ENCODE measurements at regions of chr12 and their contacts with region 1.

Region 1: DNA sequence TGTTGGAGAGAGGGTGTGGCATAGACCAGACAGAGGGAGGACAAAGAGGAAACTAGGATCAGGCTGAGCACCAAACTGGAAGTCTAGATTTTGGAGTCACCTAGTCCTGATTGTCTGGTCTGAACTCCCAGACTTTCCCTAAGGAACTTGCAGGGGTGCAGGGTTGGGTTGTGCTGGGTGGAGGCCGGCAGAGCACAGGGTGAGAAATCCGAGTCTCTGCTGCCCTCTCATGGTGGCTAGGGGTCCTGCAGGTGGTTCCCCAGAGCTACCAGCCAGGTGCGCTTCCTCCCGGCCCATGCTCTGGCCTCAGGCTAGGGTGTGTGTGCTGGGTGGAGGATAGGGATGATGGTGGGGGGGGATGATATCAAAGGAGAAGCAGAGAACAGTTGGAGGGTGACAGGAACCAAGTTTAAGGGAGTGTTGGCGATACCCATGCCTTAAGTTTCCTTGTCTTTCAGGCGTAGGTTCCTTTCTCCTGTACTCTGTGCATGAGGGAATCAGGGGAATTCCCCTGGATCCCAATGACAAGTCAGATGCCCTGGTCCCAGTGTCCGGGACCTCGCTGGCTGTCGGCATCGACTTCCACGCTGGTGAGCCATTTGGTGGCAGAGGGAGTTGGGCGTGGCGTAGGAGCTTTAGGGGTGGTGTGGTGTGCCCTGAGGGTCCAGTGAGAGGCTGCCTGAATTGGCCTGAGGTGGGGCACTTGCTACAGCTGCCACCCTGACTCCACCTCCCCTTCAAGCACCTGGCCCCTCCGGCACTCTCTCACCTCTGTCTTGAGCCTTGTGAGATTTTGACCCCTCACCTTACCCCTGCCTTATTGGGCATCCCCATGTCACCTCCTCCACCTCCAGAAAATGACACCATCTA is 33.4 kb upstream of the NXPH4 start:
- DNase-seq: peak; percentile 65
- H3K4me3 Mint-ChIP-seq: no peak overlapping the region
- H3K27ac Mint-ChIP-seq: peak overlapping the region; percentile 34
- H3K4me1 Mint-ChIP-seq: peaks cover 6% of the 10 kb centered on the region
- H3K27me3 Mint-ChIP-seq: peaks cover 6% of the 10 kb centered on the region

Region 2: GRCh38 chr12:56720731-56721151 is 462.4 kb before region 1 on chr12:
- intact Hi-C with region 1: no loop called
- DNase-seq: no peak
- H3K4me3 Mint-ChIP-seq: peak overlapping the region; percentile 45
- H3K27ac Mint-ChIP-seq: peak overlapping the region; percentile 76
- H3K4me1 Mint-ChIP-seq: peaks cover 74% of the 10 kb centered on the region
- H3K27me3 Mint-ChIP-seq: peaks cover 1% of the 10 kb centered on the region

Region 3: GRCh38 chr12:57069523-57069922 is 113.6 kb before region 1 on chr12:
- intact Hi-C with region 1: loop called (anchors 1 kb)
- DNase-seq: peak; percentile 50
- H3K4me3 Mint-ChIP-seq: peak overlapping the region; percentile 23
- H3K27ac Mint-ChIP-seq: peak overlapping the region; percentile 92
- H3K4me1 Mint-ChIP-seq: peaks cover 58% of the 10 kb centered on the region
- H3K27me3 Mint-ChIP-seq: no peaks in the 10 kb centered on the region